WTC11 (cell line): ENCODE measurements at regions of chr19 and their contacts with region 1.

Region 1: GRCh38 chr19:44570984-44571684 is 41.7 kb upstream of the CEACAM20 start:
- DNase-seq: peak; percentile 76
- ATAC-seq: peak; percentile 74
- H3K4me3 Mint-ChIP-seq: no peak overlapping the region
- H3K27ac Mint-ChIP-seq: no peak overlapping the region
- H3K4me1 Mint-ChIP-seq: peaks cover 12% of the 10 kb centered on the region
- H3K27me3 Mint-ChIP-seq: no peaks in the 10 kb centered on the region; the same call in none of the 2 replicates
- CTCF ChIP-seq: peak; percentile 70; the same call in 1 of the 2 replicates

Region 2: GRCh38 chr19:44401139-44402115 is 169.7 kb before region 1 on chr19 and contains the start of gene ZNF285:
- CTCF ChIA-PET with region 1: no interaction called
- POLR2A ChIA-PET with region 1: no interaction called
- DNase-seq: peak; percentile 93
- ATAC-seq: peak; percentile 100
- H3K4me3 Mint-ChIP-seq: peak within 1 kb of the TSS; percentile 90
- H3K27ac Mint-ChIP-seq: peak within 1 kb of the TSS; percentile 52; the same call in 1 of the 2 replicates
- H3K4me1 Mint-ChIP-seq: no peaks in the 10 kb centered on the region
- H3K27me3 Mint-ChIP-seq: peaks cover 21% of the 10 kb centered on the region
- CTCF ChIP-seq: no peak
- total RNA-seq, gene ZNF285: 1.6 to 3.9 TPM (median 2.6 TPM) in 3 replicates

Region 3: GRCh38 chr19:44587963-44588770 is 17.0 kb after region 1 on chr19:
- CTCF ChIA-PET with region 1: interaction called, 79 read pairs
- POLR2A ChIA-PET with region 1: no interaction called
- DNase-seq: no peak
- ATAC-seq: no peak
- H3K4me3 Mint-ChIP-seq: no peak overlapping the region
- H3K27ac Mint-ChIP-seq: no peak overlapping the region
- H3K4me1 Mint-ChIP-seq: peaks cover 5% of the 10 kb centered on the region
- H3K27me3 Mint-ChIP-seq: peaks cover 5% of the 10 kb centered on the region
- CTCF ChIP-seq: no peak

Region 4: DNA sequence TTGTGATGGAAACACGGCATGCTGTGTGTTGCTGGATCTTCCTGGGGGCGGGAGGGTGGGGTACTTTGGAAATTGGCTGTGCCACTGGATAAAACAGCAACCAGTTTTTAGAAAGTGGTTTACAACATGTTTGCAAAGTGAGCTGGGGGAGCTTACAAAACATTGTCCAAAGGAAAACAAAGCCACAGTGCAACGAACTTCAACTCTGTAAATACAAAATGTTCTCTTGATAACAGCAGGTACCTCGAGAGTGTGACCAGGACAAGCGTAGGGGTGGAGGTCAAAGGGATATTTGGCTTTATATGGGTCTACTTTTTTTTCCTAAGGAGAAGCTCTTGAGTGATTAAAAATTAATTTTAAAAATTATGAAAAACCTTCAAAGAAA is 44.7 kb after region 1 on chr19:
- CTCF ChIA-PET with region 1: interaction called, 27 read pairs
- POLR2A ChIA-PET with region 1: no interaction called
- DNase-seq: no peak
- ATAC-seq: no peak
- H3K4me3 Mint-ChIP-seq: no peak overlapping the region
- H3K27ac Mint-ChIP-seq: no peak overlapping the region
- H3K4me1 Mint-ChIP-seq: peaks cover 5% of the 10 kb centered on the region
- H3K27me3 Mint-ChIP-seq: no peaks in the 10 kb centered on the region
- CTCF ChIP-seq: no peak

Region 5: GRCh38 chr19:44643605-44644401 is 72.7 kb after region 1 on chr19 and contains the start of gene PVR:
- CTCF ChIA-PET with region 1: interaction called, 25 read pairs
- POLR2A ChIA-PET with region 1: interaction called, 3 read pairs
- DNase-seq: peak; percentile 61
- ATAC-seq: peak; percentile 82
- H3K4me3 Mint-ChIP-seq: peak within 1 kb of the TSS; percentile 87
- H3K27ac Mint-ChIP-seq: no peak within 1 kb of the TSS
- H3K4me1 Mint-ChIP-seq: no peaks in the 10 kb centered on the region
- H3K27me3 Mint-ChIP-seq: peaks cover 24% of the 10 kb centered on the region
- CTCF ChIP-seq: no peak
- total RNA-seq, gene PVR: 13.7 to 15.9 TPM (median 15.0 TPM) in 3 replicates

Region 6: DNA sequence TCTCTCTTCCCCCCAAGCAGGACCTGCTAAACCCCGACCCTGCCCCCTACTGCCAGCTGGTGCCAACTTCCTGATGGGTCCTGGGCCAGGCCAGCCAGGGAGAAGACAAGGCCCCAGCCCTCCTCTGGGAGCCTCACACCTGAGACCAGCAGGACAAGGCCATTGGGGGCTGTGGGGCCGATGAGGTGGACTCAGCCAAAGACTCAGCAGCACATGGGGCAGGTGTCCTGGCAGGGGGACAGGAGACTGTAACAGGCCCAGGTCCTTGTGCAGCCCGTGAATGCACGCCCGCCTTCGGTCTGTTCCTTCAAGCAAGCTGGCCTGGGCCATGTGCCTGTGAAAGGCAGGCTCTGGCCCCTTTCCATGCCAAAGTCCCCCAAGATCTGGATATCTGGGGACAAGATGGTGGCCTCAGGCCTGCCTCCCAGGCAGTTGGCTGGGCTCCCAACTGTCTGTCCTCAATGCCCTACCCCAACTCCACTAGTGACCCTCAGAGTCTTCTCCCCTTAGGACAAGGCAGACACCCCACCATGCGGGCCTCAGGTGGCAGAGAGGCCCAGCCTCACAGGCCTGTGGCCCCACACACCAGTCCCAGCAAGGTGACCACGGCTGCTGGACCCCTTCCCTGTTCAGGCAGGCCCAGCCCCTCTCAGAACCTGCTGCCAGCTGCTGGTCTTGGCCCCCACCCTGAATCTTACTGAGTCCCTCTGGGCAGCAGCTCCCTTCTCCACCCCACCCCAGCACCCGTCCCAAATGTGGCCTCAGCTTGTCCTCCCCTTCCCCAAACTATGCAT is 112.5 kb after region 1 on chr19:
- CTCF ChIA-PET with region 1: interaction called, 17 read pairs
- POLR2A ChIA-PET with region 1: no interaction called
- DNase-seq: no peak
- ATAC-seq: no peak; the same call in 1 of the 2 replicates
- H3K4me3 Mint-ChIP-seq: no peak overlapping the region
- H3K27ac Mint-ChIP-seq: no peak overlapping the region
- H3K4me1 Mint-ChIP-seq: peaks cover 4% of the 10 kb centered on the region
- H3K27me3 Mint-ChIP-seq: no peaks in the 10 kb centered on the region; the same call in 1 of the 2 replicates
- CTCF ChIP-seq: no peak

Region 7: DNA sequence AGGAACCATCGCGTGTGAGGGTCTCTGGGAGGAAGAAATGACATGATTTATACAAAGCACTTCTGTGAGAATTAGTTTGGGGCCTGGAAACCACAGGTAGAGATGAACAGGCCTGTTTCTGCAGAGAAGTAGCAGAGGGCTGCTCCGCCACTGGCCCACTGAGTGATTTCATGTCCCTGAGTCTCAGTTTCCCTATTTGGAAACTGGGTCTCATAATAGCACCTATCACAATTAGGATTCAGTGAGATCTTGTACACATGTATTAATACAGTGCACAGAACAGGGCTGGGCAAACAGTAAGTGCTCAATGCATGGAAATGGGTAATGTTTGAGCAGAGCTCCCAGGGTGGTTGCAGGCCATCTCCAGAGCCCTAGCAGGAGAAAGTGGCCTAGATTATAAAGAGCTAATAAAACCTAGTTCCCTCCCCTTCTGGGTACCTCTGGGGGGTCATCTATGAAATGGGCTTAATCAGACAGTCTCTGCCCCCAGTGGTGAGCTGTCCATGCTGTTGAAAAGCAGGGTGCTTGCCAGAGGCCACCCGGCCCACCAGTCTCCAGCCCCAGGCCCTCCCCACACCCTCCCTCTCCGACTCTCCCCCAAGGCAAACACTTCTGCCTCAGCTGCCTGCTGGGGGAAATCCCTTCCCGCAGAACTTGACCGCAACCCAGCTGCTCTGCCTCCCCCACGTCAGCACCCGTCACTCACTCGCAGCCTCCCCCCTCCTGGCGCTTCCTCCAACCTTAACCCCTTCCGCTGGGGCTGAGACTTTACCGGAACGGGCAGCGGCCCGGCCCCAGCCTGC is 181.9 kb after region 1 on chr19:
- CTCF ChIA-PET with region 1: interaction called, 10 read pairs
- POLR2A ChIA-PET with region 1: no interaction called
- DNase-seq: peak; percentile 72
- ATAC-seq: peak; percentile 27
- H3K4me3 Mint-ChIP-seq: peak overlapping the region; percentile 71
- H3K27ac Mint-ChIP-seq: no peak overlapping the region
- H3K4me1 Mint-ChIP-seq: peaks cover 30% of the 10 kb centered on the region
- H3K27me3 Mint-ChIP-seq: peaks cover 87% of the 10 kb centered on the region
- CTCF ChIP-seq: no peak